Activated T-helper 1 cell treated with anti-CD3 and anti-CD28 coated beads, Interleukin-12 subunit alpha, Interleukin-12 subunit beta, Interleukin-2, Interleukin-4 antibody, amounts not matched to agents 30 ng/mL and 10 ng/mL and 1 ng/mL, durations not matched to agents 14 hours and 24 hours and 36 hours (primary cell): ENCODE measurements at regions of chr12 and their contacts with region 1.

Region 1: GRCh38 chr12:19431407-19432308 is 7.6 kb upstream of the AEBP2 start:
- DNase-seq: peak; percentile 41
- H3K4me3 Mint-ChIP-seq: peak overlapping the region; percentile 67
- H3K27ac Mint-ChIP-seq: peak overlapping the region; percentile 99
- H3K4me1 Mint-ChIP-seq: peaks cover 54% of the 10 kb centered on the region
- H3K27me3 Mint-ChIP-seq: no peaks in the 10 kb centered on the region

Region 2: GRCh38 chr12:19263672-19264071 is 168.0 kb before region 1 on chr12:
- intact Hi-C with region 1: no loop called
- DNase-seq: no peak
- H3K4me3 Mint-ChIP-seq: no peak overlapping the region
- H3K27ac Mint-ChIP-seq: no peak overlapping the region
- H3K4me1 Mint-ChIP-seq: no peaks in the 10 kb centered on the region
- H3K27me3 Mint-ChIP-seq: no peaks in the 10 kb centered on the region

Region 3: DNA sequence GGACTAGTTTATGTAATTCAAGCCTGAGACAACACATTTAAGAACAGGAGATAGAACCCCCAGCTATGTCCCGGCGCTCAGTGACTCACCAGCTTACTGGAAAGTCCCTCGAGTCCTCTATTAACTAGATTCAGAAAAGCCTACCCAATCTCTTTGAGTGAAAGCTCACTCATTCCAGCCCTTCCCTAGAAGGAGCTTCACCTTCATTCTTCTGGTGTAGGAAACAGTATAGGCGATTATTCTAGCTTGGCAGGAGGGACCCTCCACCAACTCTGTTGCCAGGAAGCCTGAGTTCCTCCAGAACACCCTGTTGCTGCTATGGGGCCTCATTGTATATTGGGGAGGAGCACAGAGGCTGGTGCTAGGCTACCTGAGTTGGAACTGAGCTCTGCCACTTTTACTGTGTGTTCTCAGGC is 49.5 kb before region 1 on chr12:
- intact Hi-C with region 1: loop called (anchors 1 kb)
- DNase-seq: peak; percentile 22
- H3K4me3 Mint-ChIP-seq: no peak overlapping the region
- H3K27ac Mint-ChIP-seq: peak overlapping the region; percentile 7
- H3K4me1 Mint-ChIP-seq: peaks cover 9% of the 10 kb centered on the region
- H3K27me3 Mint-ChIP-seq: no peaks in the 10 kb centered on the region

Region 4: DNA sequence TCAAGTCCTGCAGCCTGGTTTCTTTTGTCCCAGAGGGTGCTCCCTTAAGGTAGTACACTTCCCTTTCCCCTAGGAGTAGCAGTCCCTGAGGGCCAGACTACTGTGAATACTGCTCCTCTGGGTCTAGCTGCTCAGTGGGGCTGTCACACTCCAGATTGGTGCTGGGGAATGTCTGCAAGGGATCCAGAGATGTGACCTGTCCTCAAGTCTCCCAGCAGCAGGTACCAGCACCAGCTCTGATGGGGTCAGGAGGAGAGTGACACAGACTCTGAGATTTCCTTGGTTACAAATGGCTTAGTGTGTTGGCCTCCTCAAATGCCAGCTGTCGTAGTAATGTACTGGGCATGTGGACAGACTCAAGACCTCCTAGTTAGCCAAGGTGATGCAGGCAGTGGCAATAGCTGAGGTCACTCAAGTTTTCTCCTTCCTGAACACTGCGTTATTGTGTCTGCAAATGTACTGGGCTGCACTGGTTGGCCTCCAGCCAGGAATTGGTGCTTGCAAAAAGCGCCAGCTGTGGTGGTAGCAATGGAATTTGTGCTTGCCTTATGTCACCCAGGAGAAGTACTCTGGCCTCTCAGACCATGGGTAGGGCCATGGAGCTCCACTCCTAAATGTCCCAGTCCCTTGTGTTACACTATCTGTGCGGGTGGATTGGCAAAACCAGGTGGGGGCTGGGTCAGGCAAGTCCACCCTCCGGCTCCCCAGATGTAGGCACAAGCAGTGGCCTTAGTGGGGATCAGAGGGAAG is 28.7 kb before region 1 on chr12:
- intact Hi-C with region 1: no loop called
- DNase-seq: no peak
- H3K4me3 Mint-ChIP-seq: no peak overlapping the region
- H3K27ac Mint-ChIP-seq: no peak overlapping the region
- H3K4me1 Mint-ChIP-seq: peaks cover 10% of the 10 kb centered on the region
- H3K27me3 Mint-ChIP-seq: no peaks in the 10 kb centered on the region

Region 5: GRCh38 chr12:19462406-19462805 is 30.7 kb after region 1 on chr12:
- intact Hi-C with region 1: loop called (anchors 2 kb)
- DNase-seq: no peak
- H3K4me3 Mint-ChIP-seq: no peak overlapping the region
- H3K27ac Mint-ChIP-seq: no peak overlapping the region
- H3K4me1 Mint-ChIP-seq: peaks cover 40% of the 10 kb centered on the region
- H3K27me3 Mint-ChIP-seq: no peaks in the 10 kb centered on the region

Region 6: DNA sequence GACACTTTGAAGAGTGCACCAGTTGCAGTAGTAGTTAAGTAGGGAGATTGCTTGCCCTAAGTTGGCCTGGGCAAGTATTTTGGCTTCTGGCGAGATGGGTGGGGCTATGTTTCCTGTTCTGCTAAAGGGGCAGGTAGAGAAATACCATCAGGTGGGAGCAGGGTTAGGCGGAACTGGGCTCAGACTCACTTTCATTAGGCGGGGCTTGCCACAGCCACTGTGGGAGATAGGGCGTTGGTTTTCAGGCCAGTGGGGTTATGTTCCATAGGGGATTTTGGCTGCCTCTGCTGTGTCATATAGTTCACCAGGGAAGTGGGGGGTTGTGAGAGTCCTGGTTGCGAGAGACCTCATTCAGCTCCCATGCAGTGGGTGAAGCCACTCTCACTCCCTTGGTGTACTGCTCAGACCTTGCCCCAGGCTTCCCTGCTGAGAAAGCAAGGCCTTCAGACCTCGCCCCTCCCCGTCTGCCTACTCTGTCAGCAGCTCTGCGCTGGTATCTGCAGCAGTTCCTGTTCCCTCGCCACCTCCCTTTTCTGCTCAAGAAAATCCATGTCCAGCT is 51.0 kb after region 1 on chr12:
- intact Hi-C with region 1: loop called (anchors 1 kb)
- DNase-seq: peak; percentile 26
- H3K4me3 Mint-ChIP-seq: peak overlapping the region; percentile 8
- H3K27ac Mint-ChIP-seq: peak overlapping the region; percentile 81
- H3K4me1 Mint-ChIP-seq: peaks cover 55% of the 10 kb centered on the region
- H3K27me3 Mint-ChIP-seq: no peaks in the 10 kb centered on the region

Region 7: GRCh38 chr12:19547271-19547671 is 115.6 kb after region 1 on chr12:
- intact Hi-C with region 1: loop called (anchors 1 kb)
- DNase-seq: no peak
- H3K4me3 Mint-ChIP-seq: no peak overlapping the region
- H3K27ac Mint-ChIP-seq: no peak overlapping the region
- H3K4me1 Mint-ChIP-seq: peaks cover 4% of the 10 kb centered on the region
- H3K27me3 Mint-ChIP-seq: no peaks in the 10 kb centered on the region

Region 8: GRCh38 chr12:19675361-19675760 is 243.7 kb after region 1 on chr12:
- intact Hi-C with region 1: loop called (anchors 1 kb)
- DNase-seq: no peak
- H3K4me3 Mint-ChIP-seq: no peak overlapping the region
- H3K27ac Mint-ChIP-seq: peak overlapping the region; percentile 45
- H3K4me1 Mint-ChIP-seq: peaks cover 41% of the 10 kb centered on the region
- H3K27me3 Mint-ChIP-seq: peaks cover 8% of the 10 kb centered on the region

Region 9: GRCh38 chr12:19683178-19683927 is 251.7 kb after region 1 on chr12:
- intact Hi-C with region 1: loop called (anchors 1 kb)
- DNase-seq: no peak
- H3K4me3 Mint-ChIP-seq: no peak overlapping the region
- H3K27ac Mint-ChIP-seq: no peak overlapping the region
- H3K4me1 Mint-ChIP-seq: peaks cover 28% of the 10 kb centered on the region
- H3K27me3 Mint-ChIP-seq: peaks cover 6% of the 10 kb centered on the region